Gastrocnemius medialis (tissue), 4 donors: ENCODE measurements at regions of chr12 and their contacts with region 1.

Region 1: DNA sequence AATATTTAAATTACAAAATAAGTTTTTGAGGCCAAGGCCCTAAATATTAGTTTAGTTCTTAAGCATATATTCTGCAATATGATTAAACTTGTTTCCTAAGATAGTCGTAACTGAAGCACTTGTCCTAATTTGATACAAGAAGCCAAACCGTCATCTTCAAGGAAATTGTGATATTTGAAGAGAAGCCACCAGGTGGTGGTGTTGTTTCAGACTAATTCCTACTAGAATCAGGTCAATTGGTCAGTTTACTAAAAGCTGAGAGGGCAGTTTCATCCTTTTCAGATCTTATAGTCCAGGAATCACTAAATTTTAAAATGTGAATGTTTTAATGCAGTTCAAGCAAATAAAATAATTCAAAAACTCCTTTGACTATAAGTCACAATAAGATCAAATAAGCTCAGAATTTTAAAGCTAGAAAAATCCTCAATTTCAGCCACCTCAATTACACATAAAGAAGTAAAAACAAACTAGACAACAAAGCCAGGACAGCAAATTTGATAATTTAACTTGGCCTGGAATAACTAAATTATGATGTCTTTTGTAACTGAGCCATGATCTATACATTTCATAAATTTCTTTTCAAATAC is 7.1 kb upstream of the ARL1 start:
- DNase-seq: peak in 1 of 2 donors; percentile 11
- ATAC-seq: peak; percentile 62 to 65
- H3K4me3 ChIP-seq: no peak overlapping the region
- H3K27ac ChIP-seq: no peak overlapping the region
- H3K4me1 ChIP-seq: no peaks in the 10 kb centered on the region
- H3K27me3 ChIP-seq: no peaks in the 10 kb centered on the region
- CTCF ChIP-seq: peak; percentile 32 to 65 (median 53)
- POLR2A ChIP-seq: no peak

Region 2: GRCh38 chr12:101351682-101352081 is 62.9 kb before region 1 on chr12:
- in situ Hi-C with region 1: no loop called
- intact Hi-C with region 1: no loop called
- DNase-seq: no peak
- ATAC-seq: no peak
- H3K4me3 ChIP-seq: no peak overlapping the region
- H3K27ac ChIP-seq: no peak overlapping the region
- H3K4me1 ChIP-seq: no peaks in the 10 kb centered on the region
- H3K27me3 ChIP-seq: no peaks in the 10 kb centered on the region
- CTCF ChIP-seq: no peak
- POLR2A ChIP-seq: no peak

Region 3: GRCh38 chr12:101490286-101490920 is 75.8 kb after region 1 on chr12:
- in situ Hi-C with region 1: no loop called
- intact Hi-C with region 1: loop called (anchors 10 kb)
- DNase-seq: peak; percentile 42 to 61
- ATAC-seq: peak; percentile 89 to 98
- H3K4me3 ChIP-seq: no peak overlapping the region
- H3K27ac ChIP-seq: peak overlapping the region; percentile 73 to 83 (median 80)
- H3K4me1 ChIP-seq: peaks cover 14 to 16% of the 10 kb centered on the region in 2 donors
- H3K27me3 ChIP-seq: no peaks in the 10 kb centered on the region
- CTCF ChIP-seq: peak; percentile 53 to 77 (median 66)
- POLR2A ChIP-seq: no peak

Region 4: GRCh38 chr12:101759396-101760047 is 344.9 kb after region 1 on chr12:
- in situ Hi-C with region 1: loop called in 2 of 4 experiments (anchors 10 to 25 kb)
- intact Hi-C with region 1: loop called (anchors 5 kb)
- DNase-seq: no peak
- ATAC-seq: peak in 1 of 2 donors; percentile 35
- H3K4me3 ChIP-seq: no peak overlapping the region
- H3K27ac ChIP-seq: no peak overlapping the region
- H3K4me1 ChIP-seq: no peaks in the 10 kb centered on the region
- H3K27me3 ChIP-seq: no peaks in the 10 kb centered on the region
- CTCF ChIP-seq: peak; percentile 30 to 64 (median 47)
- POLR2A ChIP-seq: no peak

Region 5: DNA sequence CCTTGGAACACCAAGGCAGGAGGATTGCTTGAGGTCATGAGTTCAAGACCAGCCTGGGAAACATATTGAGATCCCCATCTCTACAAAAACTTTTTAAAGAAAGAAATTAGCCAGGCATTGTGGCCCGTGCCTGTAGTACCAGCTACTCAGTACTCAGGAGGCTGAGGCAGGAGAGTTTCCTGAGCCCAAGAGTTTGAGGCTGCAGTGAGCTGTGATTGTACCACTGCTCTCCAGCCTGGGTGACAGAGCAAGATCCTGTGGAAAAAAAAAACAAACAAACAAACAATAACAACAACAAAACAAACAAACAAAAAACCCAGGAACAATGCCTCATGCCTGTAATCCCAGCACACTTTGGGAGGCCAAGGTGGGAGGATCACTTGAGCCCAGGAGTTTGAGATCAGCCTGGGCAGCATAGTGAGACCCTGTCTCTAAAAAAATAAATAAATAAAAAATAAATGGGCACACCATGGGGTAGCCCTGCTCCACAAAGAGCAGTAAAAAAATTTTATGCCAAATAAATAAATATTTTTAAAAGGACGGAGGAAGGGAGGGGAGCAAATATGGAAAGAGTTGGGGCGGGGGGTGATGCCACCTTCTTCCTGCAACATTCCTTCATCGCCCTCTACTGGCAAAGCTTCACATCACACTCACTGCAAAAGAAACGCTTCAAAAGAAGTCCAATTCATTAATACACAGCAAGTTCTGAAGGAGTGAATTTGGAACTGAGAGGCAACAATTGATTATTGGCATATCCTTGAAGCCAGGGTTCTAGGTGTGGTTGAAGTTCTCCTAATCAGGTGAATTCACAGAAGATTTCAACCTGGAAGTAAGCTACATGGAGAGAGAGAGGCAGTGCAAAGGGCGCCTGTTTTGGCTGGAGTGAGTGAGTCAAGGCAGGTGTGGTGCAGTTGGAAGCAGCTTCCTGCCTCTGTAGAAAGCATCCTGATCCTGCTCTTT is 425.0 kb after region 1 on chr12:
- in situ Hi-C with region 1: loop called (anchors 10 to 25 kb)
- intact Hi-C with region 1: loop called (anchors 1 kb)
- DNase-seq: peak; percentile 23 to 41
- ATAC-seq: peak; percentile 56 to 86
- H3K4me3 ChIP-seq: no peak overlapping the region
- H3K27ac ChIP-seq: no peak overlapping the region
- H3K4me1 ChIP-seq: peaks cover 0 to 3% of the 10 kb centered on the region in 2 donors
- H3K27me3 ChIP-seq: no peaks in the 10 kb centered on the region
- CTCF ChIP-seq: peak; percentile 73 to 90 (median 82)
- POLR2A ChIP-seq: no peak